Colonic mucosa (tissue), 4 donors: ENCODE measurements at regions of chr4 and their contacts with region 1.

Region 1: DNA sequence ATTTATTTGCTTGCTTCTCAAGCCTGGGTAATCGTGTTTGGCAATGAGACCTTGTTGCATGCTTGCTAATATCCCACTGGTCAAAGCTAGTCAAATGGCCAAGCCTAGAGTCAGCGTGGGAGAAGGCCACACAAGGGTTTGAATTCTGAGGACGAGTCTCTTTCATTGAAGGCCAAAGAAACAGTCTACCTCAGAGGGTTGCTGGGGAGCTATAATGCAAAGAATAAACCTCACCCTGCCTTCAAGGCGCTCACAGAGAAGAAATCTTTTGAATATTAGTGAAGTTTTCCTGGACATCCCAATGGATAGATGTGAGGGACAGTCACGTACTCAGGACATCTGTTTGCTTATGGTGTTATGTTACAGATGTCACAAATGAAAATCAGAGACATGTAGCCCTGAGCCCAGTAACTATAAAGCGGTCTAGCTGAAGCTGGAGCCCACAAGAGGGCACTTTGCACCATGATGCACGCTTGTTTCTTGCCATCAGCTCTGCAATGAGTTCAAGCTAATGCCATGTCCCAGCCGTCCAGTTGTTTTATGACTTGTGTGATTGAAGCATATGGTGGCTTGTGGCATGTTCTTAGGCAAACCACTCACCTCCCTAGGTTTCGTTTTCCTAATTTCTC is 1.1 kb upstream of the TLR3 start:
- DNase-seq: peak; percentile 66
- H3K4me3 ChIP-seq: peak overlapping the region; percentile 36
- H3K27ac ChIP-seq: peak overlapping the region; percentile 58
- H3K4me1 ChIP-seq: no peaks in the 10 kb centered on the region
- H3K27me3 ChIP-seq: no peaks in the 10 kb centered on the region
- CTCF ChIP-seq: peak; percentile 49

Region 2: DNA sequence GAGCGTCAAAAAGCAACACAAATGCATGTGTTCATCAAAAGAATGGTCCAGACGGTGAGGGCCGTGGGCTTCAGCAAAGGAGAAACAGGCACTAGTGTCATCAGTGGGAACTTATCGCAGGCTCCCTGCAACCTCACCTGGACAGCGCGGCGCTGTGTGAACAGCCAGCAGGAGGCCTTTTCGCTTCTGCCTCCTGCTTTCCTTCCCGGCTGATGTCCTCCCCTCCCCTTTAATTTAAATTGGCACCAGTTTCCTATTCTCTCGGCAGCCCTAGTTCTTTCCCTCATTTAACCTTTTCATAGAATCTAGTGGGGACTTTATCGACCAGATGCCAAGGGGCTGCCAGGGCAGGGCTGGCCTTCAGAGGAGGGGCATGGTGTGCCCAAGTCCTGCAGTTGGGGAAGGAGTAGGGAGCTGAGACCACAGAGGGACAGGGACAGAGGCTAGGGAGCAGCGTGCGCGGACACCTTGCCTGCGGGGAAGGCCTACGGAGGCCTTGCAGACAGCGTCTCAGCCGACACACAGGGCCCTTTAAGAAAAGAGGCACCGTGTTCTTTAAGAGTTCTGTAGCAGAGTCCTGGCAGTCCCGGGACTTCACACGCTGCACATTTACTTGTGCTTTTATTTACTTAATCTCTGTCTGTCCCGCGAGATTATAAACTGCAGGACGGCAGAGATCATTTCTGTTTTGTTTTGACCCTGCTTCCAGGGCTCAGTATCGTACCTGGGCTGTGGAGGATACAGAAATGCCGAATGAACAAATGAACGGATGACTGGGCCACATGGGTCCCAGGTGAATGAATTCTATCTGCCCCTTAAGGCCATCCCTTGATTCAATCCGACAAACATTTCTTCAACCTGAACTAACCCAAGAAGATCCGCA is 247.5 kb before region 1 on chr4:
- intact Hi-C with region 1: no loop called
- DNase-seq: no peak
- H3K4me3 ChIP-seq: no peak overlapping the region
- H3K27ac ChIP-seq: no peak overlapping the region
- H3K4me1 ChIP-seq: no peaks in the 10 kb centered on the region
- H3K27me3 ChIP-seq: no peaks in the 10 kb centered on the region
- CTCF ChIP-seq: no peak

Region 3: GRCh38 chr4:185859111-185859510 is 208.8 kb before region 1 on chr4:
- intact Hi-C with region 1: no loop called
- DNase-seq: peak; percentile 42
- H3K4me3 ChIP-seq: no peak overlapping the region
- H3K27ac ChIP-seq: no peak overlapping the region
- H3K4me1 ChIP-seq: no peaks in the 10 kb centered on the region
- H3K27me3 ChIP-seq: no peaks in the 10 kb centered on the region
- CTCF ChIP-seq: no peak

Region 4: GRCh38 chr4:186137196-186137794 is 69.4 kb after region 1 on chr4:
- intact Hi-C with region 1: loop called (anchors 5 kb)
- DNase-seq: no peak
- H3K4me3 ChIP-seq: no peak overlapping the region
- H3K27ac ChIP-seq: no peak overlapping the region
- H3K4me1 ChIP-seq: no peaks in the 10 kb centered on the region
- H3K27me3 ChIP-seq: no peaks in the 10 kb centered on the region
- CTCF ChIP-seq: peak; percentile 73

Region 5: DNA sequence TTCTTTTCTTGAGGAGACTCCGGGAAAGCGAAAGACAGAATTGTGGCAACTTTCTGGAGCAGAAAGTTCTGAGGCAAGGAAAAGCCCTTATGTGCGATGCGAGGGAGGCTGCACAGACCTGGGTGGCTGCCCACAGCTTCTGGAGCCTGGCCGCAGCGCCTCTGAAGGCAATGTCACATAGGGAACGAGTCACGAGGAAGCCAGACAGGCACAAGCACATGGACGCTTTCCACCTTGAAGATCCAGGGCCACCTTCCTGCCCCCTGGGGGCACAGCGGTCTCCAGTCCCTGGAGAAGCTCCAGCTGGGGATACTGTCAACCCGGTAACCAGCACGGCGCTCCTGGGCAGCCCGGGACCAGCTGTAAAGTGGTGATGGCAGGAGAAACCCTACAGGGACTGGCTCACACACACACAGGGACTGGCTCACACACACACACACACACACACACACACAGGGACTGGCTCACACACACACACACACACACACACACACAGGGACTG is 417.7 kb after region 1 on chr4:
- intact Hi-C with region 1: no loop called
- DNase-seq: no peak
- H3K4me3 ChIP-seq: no peak overlapping the region
- H3K27ac ChIP-seq: no peak overlapping the region
- H3K4me1 ChIP-seq: no peaks in the 10 kb centered on the region
- H3K27me3 ChIP-seq: no peaks in the 10 kb centered on the region
- CTCF ChIP-seq: no peak